ENCODE measurements at regions of chr6 and their contacts with region 1.

Region 1: DNA sequence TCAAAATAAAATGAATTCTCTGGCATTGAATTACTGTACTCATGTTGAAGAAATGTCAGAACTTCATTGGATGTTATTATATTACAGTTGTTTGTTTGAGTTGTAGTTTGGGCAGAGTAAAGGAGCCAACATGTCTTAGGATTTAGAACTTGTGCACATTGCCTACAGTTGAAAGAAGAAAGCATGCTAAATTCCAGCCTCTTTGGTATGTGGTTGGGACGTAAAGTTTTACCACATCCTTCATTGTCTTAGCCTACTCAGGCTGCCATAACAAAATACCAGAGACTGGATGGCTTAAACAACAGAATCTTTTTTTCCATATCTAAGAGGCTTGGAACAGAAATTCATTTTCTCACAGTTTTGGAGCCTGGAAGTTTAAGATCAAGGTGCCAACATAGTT is 42.4 kb downstream of the HFE start:
- DNase-seq: no peak
- H3K4me3 ChIP-seq: no peak overlapping the region
- H3K27ac ChIP-seq: no peak overlapping the region
- H3K4me1 ChIP-seq: no peaks in the 10 kb centered on the region
- H3K27me3 ChIP-seq: no peaks in the 10 kb centered on the region
- CTCF ChIP-seq: no peak
- EP300 ChIP-seq: no peak
- POLR2A ChIP-seq: no peak
- RAD21 ChIP-seq: no peak

Region 2: GRCh38 chr6:25749837-25750236 is 379.8 kb before region 1 on chr6:
- CTCF ChIA-PET with region 1: no interaction called
- POLR2A ChIA-PET with region 1: no interaction called
- DNase-seq: no peak
- H3K4me3 ChIP-seq: no peak overlapping the region
- H3K27ac ChIP-seq: no peak overlapping the region
- H3K4me1 ChIP-seq: no peaks in the 10 kb centered on the region
- H3K27me3 ChIP-seq: no peaks in the 10 kb centered on the region
- CTCF ChIP-seq: no peak
- EP300 ChIP-seq: no peak
- POLR2A ChIP-seq: no peak
- RAD21 ChIP-seq: no peak

Region 3: GRCh38 chr6:26141378-26141904 is 11.8 kb after region 1 on chr6:
- CTCF ChIA-PET with region 1: interaction called, 4 read pairs
- POLR2A ChIA-PET with region 1: interaction called, 124 read pairs
- DNase-seq: no peak
- H3K4me3 ChIP-seq: no peak overlapping the region
- H3K27ac ChIP-seq: no peak overlapping the region
- H3K4me1 ChIP-seq: no peaks in the 10 kb centered on the region
- H3K27me3 ChIP-seq: no peaks in the 10 kb centered on the region
- CTCF ChIP-seq: no peak
- EP300 ChIP-seq: no peak
- POLR2A ChIP-seq: no peak
- RAD21 ChIP-seq: no peak

Measured in H1 (cell line).